A549 (cell line): ENCODE measurements at regions of chr3 and their contacts with region 1.

Region 1: DNA sequence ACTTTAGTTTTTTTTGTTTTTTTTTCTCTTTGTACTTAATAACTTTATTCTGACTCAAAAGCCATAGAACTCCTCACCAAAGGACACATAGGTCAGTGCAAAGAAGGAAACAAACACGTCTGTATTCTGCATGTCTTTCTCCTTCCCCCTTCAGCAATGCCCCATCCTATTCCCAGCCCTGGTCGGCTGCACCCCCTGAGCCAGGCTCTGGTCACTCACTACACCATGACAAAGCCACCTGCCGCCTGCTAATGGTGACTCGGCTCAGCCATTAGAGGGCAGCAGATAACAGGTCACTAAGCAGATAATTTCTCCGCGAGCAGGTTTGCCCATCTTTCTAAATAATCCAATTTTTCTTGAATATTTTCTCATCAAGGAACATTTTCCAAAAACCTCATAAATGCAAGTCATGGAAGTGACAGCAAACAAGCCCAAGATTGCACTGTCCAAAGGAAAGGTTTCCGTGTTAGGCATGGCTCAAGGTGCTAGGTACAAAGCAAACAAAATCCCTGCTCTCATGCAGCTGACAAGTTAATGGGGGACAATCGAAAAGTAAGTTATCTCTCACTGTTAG is 37.8 kb downstream of the TM4SF4 start:
- DNase-seq: peak; percentile 78 to 82
- ATAC-seq: peak; percentile 86 to 87
- H3K4me3 ChIP-seq: no peak overlapping the region
- H3K27ac ChIP-seq: peak overlapping the region; percentile 54 to 58; a peak in 5 of 6 replicates
- H3K4me1 ChIP-seq: peaks cover 14% of the 10 kb centered on the region; the same call in 2 of the 3 replicates
- CTCF ChIP-seq: peak; percentile 94
- EP300 ChIP-seq: no peak
- POLR2A ChIP-seq: no peak
- RAD21 ChIP-seq: peak; percentile 97

Region 2: GRCh38 chr3:149095487-149095886 is 416.8 kb before region 1 on chr3:
- CTCF ChIA-PET with region 1: no interaction called
- POLR2A ChIA-PET with region 1: no interaction called
- DNase-seq: no peak
- ATAC-seq: no peak
- H3K4me3 ChIP-seq: no peak overlapping the region
- H3K27ac ChIP-seq: no peak overlapping the region
- H3K4me1 ChIP-seq: no peaks in the 10 kb centered on the region
- CTCF ChIP-seq: no peak
- EP300 ChIP-seq: no peak
- POLR2A ChIP-seq: no peak
- RAD21 ChIP-seq: no peak

Region 3: GRCh38 chr3:149466192-149466591 is 46.1 kb before region 1 on chr3:
- CTCF ChIA-PET with region 1: no interaction called
- POLR2A ChIA-PET with region 1: no interaction called
- DNase-seq: peak in 1 of 2 experiments; percentile 36
- ATAC-seq: peak; percentile 64 to 84; a peak in 3 of 6 replicates
- H3K4me3 ChIP-seq: no peak overlapping the region
- H3K27ac ChIP-seq: peak overlapping the region in 1 of 2 experiments; percentile 69; a peak in 3 of 6 replicates
- H3K4me1 ChIP-seq: peaks cover 26% of the 10 kb centered on the region
- CTCF ChIP-seq: no peak
- EP300 ChIP-seq: no peak
- POLR2A ChIP-seq: no peak
- RAD21 ChIP-seq: no peak

Region 4: GRCh38 chr3:149494022-149494758 is 18.1 kb before region 1 on chr3:
- CTCF ChIA-PET with region 1: interaction called, 22 read pairs
- POLR2A ChIA-PET with region 1: no interaction called
- DNase-seq: peak; percentile 72 to 76
- ATAC-seq: peak; percentile 82 to 90; a peak in 5 of 6 replicates
- H3K4me3 ChIP-seq: no peak overlapping the region
- H3K27ac ChIP-seq: peak overlapping the region in 1 of 2 experiments; percentile 44; a peak in 1 of 6 replicates
- H3K4me1 ChIP-seq: peaks cover 6% of the 10 kb centered on the region; the same call in 2 of the 3 replicates
- CTCF ChIP-seq: peak; percentile 89
- EP300 ChIP-seq: no peak
- POLR2A ChIP-seq: no peak
- RAD21 ChIP-seq: peak; percentile 87 to 95

Region 5: DNA sequence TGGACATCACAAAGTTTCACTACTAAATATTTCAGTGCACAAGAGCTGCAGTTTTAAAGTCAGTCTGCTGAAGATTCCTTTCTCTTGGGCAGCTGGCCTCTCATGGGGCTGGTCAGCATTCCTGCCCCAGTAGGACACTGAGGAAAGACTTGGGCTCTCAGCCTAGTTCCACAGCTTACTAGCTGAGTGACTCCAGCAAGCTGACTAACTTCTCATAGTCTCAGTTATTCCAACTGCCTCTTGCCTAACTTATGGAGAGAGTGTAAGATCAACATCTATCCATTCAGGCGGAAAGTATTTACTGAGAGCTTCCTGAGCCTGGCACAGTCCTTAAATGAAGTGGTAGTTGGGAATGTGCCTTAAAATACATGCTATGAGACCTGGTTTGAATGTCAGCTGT is 10.8 kb before region 1 on chr3:
- CTCF ChIA-PET with region 1: interaction called, 14 read pairs
- POLR2A ChIA-PET with region 1: no interaction called
- DNase-seq: no peak
- ATAC-seq: peak in 1 of 2 experiments; percentile 21; a peak in 1 of 6 replicates
- H3K4me3 ChIP-seq: no peak overlapping the region
- H3K27ac ChIP-seq: no peak overlapping the region
- H3K4me1 ChIP-seq: peaks cover 2% of the 10 kb centered on the region; the same call in 1 of the 3 replicates
- CTCF ChIP-seq: no peak
- EP300 ChIP-seq: no peak
- POLR2A ChIP-seq: no peak
- RAD21 ChIP-seq: no peak

Region 6: GRCh38 chr3:149527531-149528339 is 15.4 kb after region 1 on chr3:
- CTCF ChIA-PET with region 1: interaction called, 11 read pairs
- POLR2A ChIA-PET with region 1: no interaction called
- DNase-seq: peak; percentile 39 to 75
- ATAC-seq: peak; percentile 76 to 83
- H3K4me3 ChIP-seq: no peak overlapping the region
- H3K27ac ChIP-seq: peak overlapping the region; percentile 70 to 81
- H3K4me1 ChIP-seq: peaks cover 59% of the 10 kb centered on the region
- CTCF ChIP-seq: peak; percentile 51
- EP300 ChIP-seq: no peak
- POLR2A ChIP-seq: no peak
- RAD21 ChIP-seq: peak; percentile 41 to 59

Region 7: GRCh38 chr3:149752051-149752787 is 239.9 kb after region 1 on chr3 and contains the start of gene COMMD2:
- CTCF ChIA-PET with region 1: interaction called, 13 read pairs
- POLR2A ChIA-PET with region 1: no interaction called
- DNase-seq: peak; percentile 82 to 94
- ATAC-seq: peak; percentile 100
- H3K4me3 ChIP-seq: peak within 1 kb of the TSS; percentile 76
- H3K27ac ChIP-seq: peak within 1 kb of the TSS; percentile 87 to 96
- H3K4me1 ChIP-seq: peaks cover 18% of the 10 kb centered on the region; the same call in 2 of the 3 replicates
- CTCF ChIP-seq: peak; percentile 44; the same call in 2 of the 3 replicates
- EP300 ChIP-seq: no peak
- POLR2A ChIP-seq: peak; percentile 86
- RAD21 ChIP-seq: peak; percentile 53 to 65; a peak in 4 of 5 replicates
- polyA plus RNA-seq, gene COMMD2: 71.5 and 76.1 TPM in 2 replicates

Region 8: DNA sequence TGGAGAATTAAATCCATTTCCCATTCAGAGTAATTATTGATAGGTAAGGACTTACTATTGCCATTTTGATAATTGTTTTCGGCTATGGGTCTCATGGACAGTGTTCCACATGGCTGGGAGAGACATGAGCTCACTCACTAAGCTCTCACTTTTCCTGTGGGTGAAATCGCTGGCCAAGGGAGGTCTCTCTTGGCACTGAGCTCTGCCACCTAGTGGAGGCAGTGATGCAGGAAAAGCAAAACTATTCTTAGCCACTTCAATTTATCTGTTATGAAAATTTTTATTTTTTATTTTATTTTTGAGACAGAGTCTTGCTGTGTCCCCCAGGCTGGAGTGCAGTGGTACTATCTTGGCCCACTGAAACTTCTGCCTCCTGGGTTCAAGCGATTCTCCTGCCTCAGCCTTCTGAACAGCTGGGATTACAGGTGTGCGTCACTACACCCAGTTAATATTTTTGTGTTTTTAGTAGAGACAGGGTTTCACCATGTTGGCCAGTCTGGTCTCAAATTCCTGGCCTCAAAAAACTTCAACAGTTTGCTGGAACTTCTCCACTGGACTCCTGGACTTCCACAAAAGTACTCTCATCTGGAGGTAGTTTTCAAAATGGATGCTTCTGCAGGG is 296.0 kb after region 1 on chr3:
- CTCF ChIA-PET with region 1: interaction called, 22 read pairs
- POLR2A ChIA-PET with region 1: no interaction called
- DNase-seq: peak; percentile 60 to 79
- ATAC-seq: peak; percentile 15 to 31; a peak in 2 of 6 replicates
- H3K4me3 ChIP-seq: no peak overlapping the region
- H3K27ac ChIP-seq: peak overlapping the region in 1 of 2 experiments; percentile 54; a peak in 1 of 6 replicates
- H3K4me1 ChIP-seq: peaks cover 25% of the 10 kb centered on the region
- CTCF ChIP-seq: peak; percentile 93
- EP300 ChIP-seq: no peak
- POLR2A ChIP-seq: no peak
- RAD21 ChIP-seq: peak; percentile 77 to 79